CD8-positive, alpha-beta T cell (primary cell): ENCODE measurements at regions of chr19 and their contacts with region 1.

Region 1: GRCh38 chr19:15379083-15379995 is at the start of gene AKAP8:
- DNase-seq: peak; percentile 95 to 100 (median 98)
- ATAC-seq: peak; percentile 88
- H3K4me3 ChIP-seq: peak within 1 kb of the TSS; percentile 92 to 96
- H3K4me3 Mint-ChIP-seq: peak within 1 kb of the TSS; percentile 94
- H3K27ac ChIP-seq: peak within 1 kb of the TSS; percentile 98 to 99
- H3K27ac Mint-ChIP-seq: peak within 1 kb of the TSS; percentile 98
- H3K4me1 ChIP-seq: peaks cover 36% of the 10 kb centered on the region
- H3K4me1 Mint-ChIP-seq: peaks cover 40% of the 10 kb centered on the region
- H3K27me3 ChIP-seq: no peaks in the 10 kb centered on the region
- H3K27me3 Mint-ChIP-seq: no peaks in the 10 kb centered on the region
- CTCF ChIP-seq: no peak
- total RNA-seq, gene AKAP8: 97.4 to 109 TPM

Region 2: DNA sequence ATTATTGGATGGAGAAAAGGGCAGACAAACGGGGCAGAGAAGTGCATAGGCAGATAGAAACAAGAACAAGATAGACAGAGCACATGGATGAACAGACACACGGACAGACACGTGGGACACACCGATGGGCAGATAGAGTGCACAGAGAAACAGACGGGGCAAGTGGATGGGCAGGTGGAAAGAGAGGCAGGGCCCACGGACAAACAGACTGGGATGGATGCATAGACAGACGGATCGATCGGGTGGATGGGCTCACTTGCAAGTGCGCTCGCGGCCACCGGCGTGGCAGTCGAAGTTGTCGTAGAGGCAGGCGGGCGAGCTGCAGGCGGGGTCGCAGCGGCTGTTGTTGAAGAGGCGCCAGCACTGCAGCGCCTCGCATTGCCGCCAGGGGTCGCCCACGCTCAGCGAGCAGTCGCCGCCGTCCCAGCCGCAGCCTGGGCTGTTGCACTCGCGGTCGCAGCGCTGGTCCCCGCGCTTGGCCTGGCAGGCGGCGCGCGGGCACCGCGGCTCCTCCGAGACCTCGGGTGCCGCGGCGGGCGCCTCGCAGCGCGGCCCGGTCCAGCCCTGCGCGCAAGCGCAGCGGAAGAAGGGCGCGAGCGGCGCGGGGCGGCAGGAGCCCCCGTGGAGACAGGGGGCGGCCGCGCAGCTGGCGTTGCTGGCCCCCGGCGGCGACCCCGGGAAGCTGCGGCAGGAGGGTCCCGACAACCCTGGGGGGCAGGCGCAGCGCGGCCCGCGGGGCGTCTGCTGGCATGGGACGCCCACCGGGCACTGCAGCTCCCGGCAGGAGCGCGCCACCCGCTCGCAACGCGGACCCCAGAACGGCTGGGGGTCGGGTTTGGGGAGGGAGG is 201.8 kb before region 1 on chr19:
- CTCF ChIA-PET with region 1: no interaction called
- POLR2A ChIA-PET with region 1: interaction called, 3 read pairs
- intact Hi-C with region 1: loop called in 1 of 2 experiments (anchors 2 kb)
- DNase-seq: peak; percentile 74 to 91 (median 82)
- ATAC-seq: peak; percentile 98
- H3K4me3 ChIP-seq: no peak overlapping the region
- H3K4me3 Mint-ChIP-seq: peak overlapping the region; percentile 36
- H3K27ac ChIP-seq: no peak overlapping the region
- H3K27ac Mint-ChIP-seq: no peak overlapping the region
- H3K4me1 ChIP-seq: peaks cover 4% of the 10 kb centered on the region
- H3K4me1 Mint-ChIP-seq: peaks cover 4% of the 10 kb centered on the region
- H3K27me3 ChIP-seq: peaks cover 0 to 8% of the 10 kb centered on the region in 2 experiments
- H3K27me3 Mint-ChIP-seq: peaks cover 15% of the 10 kb centered on the region
- CTCF ChIP-seq: peak; percentile 91

Region 3: GRCh38 chr19:15332311-15332996 is 46.9 kb before region 1 on chr19 and contains the start of gene BRD4:
- CTCF ChIA-PET with region 1: no interaction called
- POLR2A ChIA-PET with region 1: interaction called, 12 read pairs
- intact Hi-C with region 1: loop called (anchors 1 kb)
- DNase-seq: peak; percentile 58 to 88 (median 77)
- ATAC-seq: peak; percentile 63
- H3K4me3 ChIP-seq: peak within 1 kb of the TSS; percentile 81 to 97
- H3K4me3 Mint-ChIP-seq: peak within 1 kb of the TSS; percentile 95
- H3K27ac ChIP-seq: peak within 1 kb of the TSS; percentile 71 to 83
- H3K27ac Mint-ChIP-seq: peak within 1 kb of the TSS; percentile 96
- H3K4me1 ChIP-seq: peaks cover 42% of the 10 kb centered on the region
- H3K4me1 Mint-ChIP-seq: peaks cover 42% of the 10 kb centered on the region
- H3K27me3 ChIP-seq: no peaks in the 10 kb centered on the region
- H3K27me3 Mint-ChIP-seq: no peaks in the 10 kb centered on the region
- CTCF ChIP-seq: no peak
- total RNA-seq, gene BRD4: 123 to 128 TPM

Region 4: GRCh38 chr19:15466851-15467733 is 87.8 kb after region 1 on chr19:
- CTCF ChIA-PET with region 1: interaction called, 4 read pairs
- POLR2A ChIA-PET with region 1: interaction called, 9 read pairs
- intact Hi-C with region 1: loop called in 1 of 2 experiments (anchors 1 kb)
- DNase-seq: peak in 8 of 9 experiments; percentile 32 to 75 (median 59)
- ATAC-seq: peak; percentile 25
- H3K4me3 ChIP-seq: no peak overlapping the region
- H3K4me3 Mint-ChIP-seq: peak overlapping the region; percentile 50
- H3K27ac ChIP-seq: peak overlapping the region in 1 of 2 experiments; percentile 68
- H3K27ac Mint-ChIP-seq: peak overlapping the region; percentile 89
- H3K4me1 ChIP-seq: peaks cover 58% of the 10 kb centered on the region
- H3K4me1 Mint-ChIP-seq: peaks cover 61% of the 10 kb centered on the region
- H3K27me3 ChIP-seq: no peaks in the 10 kb centered on the region
- H3K27me3 Mint-ChIP-seq: no peaks in the 10 kb centered on the region
- CTCF ChIP-seq: no peak